PC-9 (cell line): ENCODE measurements at regions of chr14 and their contacts with region 1.

Region 1: DNA sequence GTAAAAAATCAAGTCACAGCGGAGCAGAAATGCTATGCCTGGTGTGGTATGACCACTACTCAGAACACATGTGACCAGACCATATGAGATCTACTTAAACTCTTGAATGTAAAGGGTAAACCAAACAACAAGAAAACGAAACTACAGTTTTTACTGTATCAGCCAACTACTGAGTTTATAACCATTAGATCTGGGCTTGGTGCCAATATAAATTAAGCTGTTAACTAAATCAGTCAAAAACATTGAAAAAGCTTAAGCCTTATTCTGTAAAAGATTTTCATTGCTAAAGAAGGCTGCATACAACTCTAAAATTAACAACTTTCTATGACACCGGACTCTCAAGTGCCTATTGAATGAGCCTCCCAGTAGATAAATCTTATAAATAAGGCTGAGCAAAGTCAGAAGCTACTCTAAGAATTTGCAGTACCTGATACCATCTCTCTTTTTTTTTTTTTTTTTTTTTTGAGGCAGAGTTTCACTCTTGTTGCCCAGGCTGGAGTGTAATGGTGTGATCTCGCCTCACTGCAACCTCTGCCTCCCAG is 35.4 kb downstream of the SPTLC2 start:
- DNase-seq: peak in 1 of 2 experiments; percentile 73
- H3K4me3 ChIP-seq: no peak overlapping the region
- H3K27ac ChIP-seq: peak overlapping the region; percentile 48
- H3K4me1 ChIP-seq: no peaks in the 10 kb centered on the region; the same call in 1 of the 2 replicates
- H3K27me3 ChIP-seq: no peaks in the 10 kb centered on the region
- CTCF ChIP-seq: no peak

Region 2: DNA sequence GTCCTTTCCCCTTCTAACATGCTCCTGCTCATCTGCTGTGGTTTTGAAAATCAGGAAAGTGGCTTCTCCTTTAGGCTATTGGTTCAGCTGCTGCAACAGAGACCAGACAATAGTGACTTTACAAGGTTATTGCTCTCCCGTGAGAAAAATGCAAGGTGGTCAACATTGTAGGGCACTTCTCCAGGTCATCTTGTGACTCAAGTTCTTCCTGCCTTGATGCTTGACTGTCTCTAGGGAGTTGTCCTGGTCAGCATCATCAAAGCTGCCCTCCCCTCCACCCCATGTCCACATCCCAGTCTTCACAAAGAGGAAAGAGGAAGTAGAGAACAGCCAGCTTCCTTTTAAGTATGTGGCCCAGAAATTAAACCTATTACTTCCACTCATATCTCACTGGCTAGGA is 403.3 kb before region 1 on chr14:
- CTCF ChIA-PET with region 1: no interaction called
- POLR2A ChIA-PET with region 1: no interaction called
- intact Hi-C with region 1: no loop called
- DNase-seq: peak in 1 of 2 experiments; percentile 51
- H3K4me3 ChIP-seq: no peak overlapping the region
- H3K27ac ChIP-seq: no peak overlapping the region
- H3K4me1 ChIP-seq: no peaks in the 10 kb centered on the region
- H3K27me3 ChIP-seq: peaks cover 86% of the 10 kb centered on the region
- CTCF ChIP-seq: no peak

Region 3: DNA sequence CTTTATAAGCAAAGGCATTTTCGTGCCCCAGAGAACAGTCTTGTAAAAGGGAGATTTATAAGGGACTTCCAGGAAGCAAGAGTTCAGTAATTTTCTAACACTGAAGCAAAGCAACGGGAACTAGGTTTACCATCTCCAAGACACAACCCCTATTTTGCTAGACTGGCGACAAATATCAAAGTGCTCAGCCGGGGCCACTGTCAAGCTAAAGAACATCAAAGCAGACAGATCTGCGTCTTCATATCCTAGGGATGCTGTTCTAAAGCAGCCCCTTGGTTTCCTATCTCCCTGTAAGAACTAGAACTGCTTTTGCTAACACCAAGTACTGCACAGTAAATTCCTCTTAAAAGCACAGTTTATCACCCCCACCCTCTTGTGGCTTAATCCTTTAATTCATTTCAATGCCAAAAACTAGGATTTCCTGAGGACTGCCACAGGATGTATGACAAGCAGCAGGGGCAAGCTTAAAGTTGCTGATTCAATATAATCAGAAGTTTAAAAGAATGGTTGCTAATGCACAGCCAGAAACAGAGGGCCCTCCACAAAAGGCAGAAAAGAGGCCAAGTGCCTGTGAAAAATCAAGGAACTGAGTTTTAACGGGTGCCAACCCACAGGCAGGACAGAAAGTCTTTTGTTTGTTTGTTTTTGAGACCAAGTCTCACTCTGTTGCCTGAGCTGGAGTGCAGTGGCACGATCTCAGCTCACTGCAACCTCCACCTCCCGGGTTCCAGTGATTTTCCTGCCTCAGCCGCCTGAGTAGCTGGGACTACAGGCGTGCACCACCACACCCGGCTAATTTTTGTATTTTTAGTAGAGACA is 38.4 kb before region 1 on chr14:
- CTCF ChIA-PET with region 1: no interaction called
- POLR2A ChIA-PET with region 1: no interaction called
- intact Hi-C with region 1: no loop called
- DNase-seq: no peak
- H3K4me3 ChIP-seq: no peak overlapping the region
- H3K27ac ChIP-seq: no peak overlapping the region
- H3K4me1 ChIP-seq: no peaks in the 10 kb centered on the region
- H3K27me3 ChIP-seq: no peaks in the 10 kb centered on the region
- CTCF ChIP-seq: no peak

Region 4: GRCh38 chr14:77603654-77604255 is 22.7 kb after region 1 on chr14:
- CTCF ChIA-PET with region 1: interaction called, 5 read pairs
- POLR2A ChIA-PET with region 1: interaction called, 12 read pairs
- intact Hi-C with region 1: no loop called
- DNase-seq: no peak
- H3K4me3 ChIP-seq: no peak overlapping the region
- H3K27ac ChIP-seq: no peak overlapping the region
- H3K4me1 ChIP-seq: 0 out of 2 replicates have a peak, but pooled peaks cover 4% of the 10 kb centered on the region
- H3K27me3 ChIP-seq: no peaks in the 10 kb centered on the region
- CTCF ChIP-seq: peak; percentile 45; the same call in 1 of the 2 replicates

Region 5: DNA sequence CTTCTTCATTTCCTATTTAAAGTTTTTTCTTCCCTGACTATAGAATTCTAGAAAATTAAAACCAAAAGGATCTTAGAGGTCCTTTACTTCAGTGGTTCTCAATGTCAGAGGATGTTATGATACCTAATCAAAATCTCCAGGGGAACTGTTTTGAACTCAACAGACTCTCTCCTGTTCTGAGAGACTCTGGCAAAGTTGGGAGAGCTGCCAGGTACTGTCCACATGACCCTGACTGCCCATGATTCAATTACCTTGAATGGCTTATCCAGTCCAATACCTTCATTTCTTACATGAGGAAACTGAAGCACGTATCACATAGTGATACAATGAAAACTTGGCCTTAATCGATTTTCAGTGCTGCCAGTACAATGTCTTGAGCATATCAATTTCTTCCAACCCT is 110.2 kb after region 1 on chr14:
- CTCF ChIA-PET with region 1: interaction called, 16 read pairs
- POLR2A ChIA-PET with region 1: no interaction called
- intact Hi-C with region 1: no loop called
- DNase-seq: no peak
- H3K4me3 ChIP-seq: no peak overlapping the region
- H3K27ac ChIP-seq: no peak overlapping the region
- H3K4me1 ChIP-seq: no peaks in the 10 kb centered on the region
- H3K27me3 ChIP-seq: no peaks in the 10 kb centered on the region
- CTCF ChIP-seq: no peak

Region 6: DNA sequence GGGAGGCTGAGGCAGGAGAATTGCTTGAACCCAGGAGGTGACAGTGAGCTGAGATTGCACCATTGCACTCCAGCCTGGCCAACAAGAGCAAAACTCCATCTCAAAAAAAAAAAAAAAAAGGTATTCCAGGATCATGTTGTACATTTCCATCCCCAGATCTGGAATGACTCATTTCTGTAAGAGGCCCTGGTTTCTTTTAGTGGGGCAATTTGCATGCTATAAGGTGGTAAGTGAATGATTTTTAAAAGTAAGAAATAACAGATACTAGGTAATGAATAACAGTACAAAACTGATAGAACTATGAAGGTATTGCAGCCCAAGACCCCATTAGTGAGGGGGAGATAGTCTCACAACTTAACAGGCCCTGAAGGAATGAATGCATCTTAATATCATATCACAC is 201.2 kb after region 1 on chr14:
- CTCF ChIA-PET with region 1: interaction called, 13 read pairs
- POLR2A ChIA-PET with region 1: no interaction called
- intact Hi-C with region 1: no loop called
- DNase-seq: no peak
- H3K4me3 ChIP-seq: no peak overlapping the region
- H3K27ac ChIP-seq: no peak overlapping the region
- H3K4me1 ChIP-seq: 0 out of 2 replicates have a peak, but pooled peaks cover under 1% of the 10 kb centered on the region
- H3K27me3 ChIP-seq: no peaks in the 10 kb centered on the region
- CTCF ChIP-seq: no peak